CD8-positive, alpha-beta T cell (primary cell): ENCODE measurements at regions of chr7 and their contacts with region 1.

Region 1: DNA sequence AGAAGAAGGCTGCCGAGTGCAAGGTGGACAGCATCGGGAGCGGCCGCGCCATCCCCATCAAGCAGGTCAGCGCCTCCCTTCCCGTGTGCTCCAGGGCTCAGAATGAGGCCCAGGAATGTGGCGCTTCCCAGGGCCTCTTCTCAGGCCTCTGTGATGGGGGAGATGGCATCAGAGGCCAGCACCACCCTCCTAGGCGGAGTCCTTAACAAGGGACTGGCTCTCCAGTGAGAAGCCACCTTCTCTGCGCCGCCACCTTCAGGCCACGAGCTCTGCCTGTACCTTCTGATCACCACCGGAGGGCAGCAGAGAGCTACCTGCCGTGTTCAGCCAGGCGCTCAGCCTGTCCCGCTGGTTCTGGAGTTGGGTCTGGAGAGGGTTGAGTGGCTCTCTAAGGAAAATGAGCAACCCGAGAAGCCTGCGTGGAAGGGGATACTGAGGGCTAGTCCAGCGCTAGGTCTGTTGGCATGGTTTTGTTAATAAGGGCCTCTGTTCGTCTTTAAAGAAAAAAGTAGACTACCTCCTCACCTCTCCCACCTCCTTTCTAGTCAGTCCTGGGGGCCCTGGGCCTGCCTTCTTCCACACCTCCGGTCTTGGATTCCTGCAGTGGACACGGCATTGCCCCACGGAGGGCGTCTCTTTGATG is 37.7 kb downstream of the AGAP3 start:
- DNase-seq: peak; percentile 69 to 88 (median 81)
- ATAC-seq: peak; percentile 99
- H3K4me3 ChIP-seq: no peak overlapping the region
- H3K4me3 Mint-ChIP-seq: no peak overlapping the region
- H3K27ac ChIP-seq: no peak overlapping the region
- H3K27ac Mint-ChIP-seq: no peak overlapping the region
- H3K4me1 ChIP-seq: no peaks in the 10 kb centered on the region
- H3K4me1 Mint-ChIP-seq: no peaks in the 10 kb centered on the region
- H3K27me3 ChIP-seq: no peaks in the 10 kb centered on the region
- H3K27me3 Mint-ChIP-seq: peaks cover 2% of the 10 kb centered on the region
- CTCF ChIP-seq: peak; percentile 93

Region 2: GRCh38 chr7:151172273-151173141 is 48.6 kb after region 1 on chr7:
- CTCF ChIA-PET with region 1: interaction called, 8 read pairs
- POLR2A ChIA-PET with region 1: no interaction called
- intact Hi-C with region 1: loop called (anchors 1 kb)
- DNase-seq: peak; percentile 52 to 88 (median 78)
- ATAC-seq: peak; percentile 87
- H3K4me3 ChIP-seq: no peak overlapping the region
- H3K4me3 Mint-ChIP-seq: no peak overlapping the region
- H3K27ac ChIP-seq: no peak overlapping the region
- H3K27ac Mint-ChIP-seq: no peak overlapping the region
- H3K4me1 ChIP-seq: peaks cover 5% of the 10 kb centered on the region
- H3K4me1 Mint-ChIP-seq: peaks cover 10% of the 10 kb centered on the region
- H3K27me3 ChIP-seq: peaks cover 0 to 12% of the 10 kb centered on the region in 2 experiments
- H3K27me3 Mint-ChIP-seq: peaks cover 62% of the 10 kb centered on the region
- CTCF ChIP-seq: peak; percentile 100

Region 3: DNA sequence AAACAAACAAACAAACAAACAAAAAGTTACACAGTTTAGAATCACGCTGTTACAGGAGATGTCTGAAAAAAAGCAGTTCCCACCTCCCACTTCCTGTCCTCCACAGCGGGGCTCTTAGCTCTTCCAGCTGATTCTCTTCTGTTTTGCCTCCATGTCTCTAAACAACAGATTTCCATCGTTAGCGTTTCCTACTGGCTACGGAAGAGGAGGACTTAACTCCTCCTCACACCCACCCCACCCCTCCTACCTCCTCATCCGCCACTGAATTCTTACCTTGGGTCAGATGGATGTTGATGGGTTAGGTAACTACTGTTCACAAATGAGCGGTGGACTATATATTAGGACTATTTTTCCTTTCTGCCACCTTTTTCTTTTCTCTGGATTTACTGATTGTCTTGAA is 180.9 kb after region 1 on chr7:
- CTCF ChIA-PET with region 1: interaction called, 6 read pairs
- POLR2A ChIA-PET with region 1: interaction called, 3 read pairs
- intact Hi-C with region 1: loop called in 1 of 2 experiments (anchors 1 kb)
- DNase-seq: no peak
- ATAC-seq: no peak
- H3K4me3 ChIP-seq: no peak overlapping the region
- H3K4me3 Mint-ChIP-seq: no peak overlapping the region
- H3K27ac ChIP-seq: no peak overlapping the region
- H3K27ac Mint-ChIP-seq: no peak overlapping the region
- H3K4me1 ChIP-seq: peaks cover 8% of the 10 kb centered on the region
- H3K4me1 Mint-ChIP-seq: peaks cover 6% of the 10 kb centered on the region
- H3K27me3 ChIP-seq: peaks cover 0 to 14% of the 10 kb centered on the region in 2 experiments
- H3K27me3 Mint-ChIP-seq: peaks cover 38% of the 10 kb centered on the region
- CTCF ChIP-seq: no peak

Region 4: DNA sequence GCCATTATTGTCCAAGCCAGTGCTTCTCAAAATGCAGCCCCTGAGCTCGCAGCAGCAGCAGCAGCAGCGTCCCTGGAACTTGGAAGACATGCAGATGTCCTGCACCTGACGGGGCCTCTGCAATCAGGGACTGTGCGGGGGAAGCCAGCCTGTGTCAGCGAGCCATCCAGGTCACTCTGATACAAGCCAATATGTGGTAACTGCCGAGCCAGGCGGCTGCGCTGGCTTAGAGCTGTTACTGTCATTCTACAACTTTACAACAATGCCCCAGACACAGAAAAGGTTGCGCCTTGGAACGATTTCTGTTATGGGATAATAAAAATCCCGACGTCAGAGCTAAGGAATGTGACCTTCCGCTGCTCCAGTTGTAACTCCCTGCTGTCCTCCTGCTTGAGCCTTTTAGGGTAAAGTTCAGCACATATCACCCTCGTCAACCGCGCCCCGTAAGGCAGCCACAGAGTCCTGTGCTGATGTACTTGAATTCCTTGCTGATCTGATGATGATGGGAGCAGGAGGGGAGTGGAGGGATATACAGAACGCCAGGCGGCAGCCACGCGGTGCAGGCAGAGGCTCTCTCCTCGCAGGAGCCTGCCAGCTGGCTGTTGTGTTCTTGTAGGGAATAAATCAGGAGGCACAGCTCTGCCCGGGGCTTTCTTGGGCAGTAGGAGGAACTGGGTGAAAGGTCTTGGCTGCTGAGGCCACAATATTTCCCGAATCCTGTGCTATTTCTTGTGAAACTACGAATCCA is 336.0 kb after region 1 on chr7:
- CTCF ChIA-PET with region 1: no interaction called
- POLR2A ChIA-PET with region 1: no interaction called
- intact Hi-C with region 1: loop called in 1 of 2 experiments (anchors 10 kb)
- DNase-seq: no peak
- ATAC-seq: no peak
- H3K4me3 ChIP-seq: no peak overlapping the region
- H3K4me3 Mint-ChIP-seq: no peak overlapping the region
- H3K27ac ChIP-seq: no peak overlapping the region
- H3K27ac Mint-ChIP-seq: no peak overlapping the region
- H3K4me1 ChIP-seq: no peaks in the 10 kb centered on the region
- H3K4me1 Mint-ChIP-seq: peaks cover 5% of the 10 kb centered on the region
- H3K27me3 ChIP-seq: no peaks in the 10 kb centered on the region
- H3K27me3 Mint-ChIP-seq: peaks cover 7% of the 10 kb centered on the region
- CTCF ChIP-seq: no peak